K562 (cell line): ENCODE measurements at regions of chr3 and their contacts with region 1.

Region 1: GRCh38 chr3:13405614-13406013 is 14.5 kb downstream of the NUP210 start:
- DNase-seq: peak in 1 of 4 experiments; percentile 48
- ATAC-seq: no peak
- H3K4me3 ChIP-seq: no peak overlapping the region
- H3K27ac ChIP-seq: peak overlapping the region; percentile 8; the same call in 1 of the 3 replicates
- H3K4me1 ChIP-seq: peaks cover 32 to 42% of the 10 kb centered on the region in 2 experiments; a peak in 4 of 5 replicates
- H3K27me3 ChIP-seq: no peaks in the 10 kb centered on the region
- CTCF ChIP-seq: no peak
- EP300 ChIP-seq: no peak
- POLR2A ChIP-seq: no peak
- RAD21 ChIP-seq: no peak

Region 2: GRCh38 chr3:12436514-12437220 is 968.9 kb before region 1 on chr3:
- CTCF ChIA-PET with region 1: no interaction called
- POLR2A ChIA-PET with region 1: no interaction called
- in situ Hi-C with region 1: no loop called
- intact Hi-C with region 1: no loop called
- DNase-seq: no peak
- ATAC-seq: no peak
- H3K4me3 ChIP-seq: no peak overlapping the region
- H3K27ac ChIP-seq: no peak overlapping the region
- H3K4me1 ChIP-seq: peaks cover 0 to 3% of the 10 kb centered on the region in 2 experiments; a peak in 1 of 5 replicates
- H3K27me3 ChIP-seq: peaks cover 42 to 67% of the 10 kb centered on the region in 2 experiments
- CTCF ChIP-seq: no peak
- EP300 ChIP-seq: no peak
- POLR2A ChIP-seq: no peak
- RAD21 ChIP-seq: no peak

Region 3: DNA sequence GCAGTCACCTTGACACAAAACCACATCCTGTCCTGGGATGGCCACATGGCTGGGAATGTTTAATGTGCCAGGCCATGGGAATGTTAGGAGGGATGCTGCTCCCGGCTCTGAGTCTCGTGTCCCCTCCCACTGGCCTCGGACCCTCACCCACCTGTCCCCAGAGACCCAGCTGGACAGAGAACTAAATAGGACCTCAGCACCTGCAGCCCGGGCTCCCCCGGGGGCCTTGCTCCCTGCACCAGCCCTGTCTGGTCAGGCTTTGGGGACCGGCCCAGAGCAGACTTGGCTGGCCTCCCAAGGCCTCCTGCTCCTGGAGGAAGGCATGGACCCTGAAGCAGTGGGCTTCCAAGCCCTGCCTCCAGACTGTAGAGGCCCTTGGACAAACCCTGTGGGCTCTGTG is 232.4 kb before region 1 on chr3:
- CTCF ChIA-PET with region 1: no interaction called
- POLR2A ChIA-PET with region 1: no interaction called
- in situ Hi-C with region 1: no loop called
- intact Hi-C with region 1: no loop called
- DNase-seq: no peak
- ATAC-seq: no peak
- H3K4me3 ChIP-seq: no peak overlapping the region
- H3K27ac ChIP-seq: no peak overlapping the region
- H3K4me1 ChIP-seq: no peaks in the 10 kb centered on the region; a peak in 1 of 5 replicates
- H3K27me3 ChIP-seq: peaks cover 18 to 40% of the 10 kb centered on the region in 2 experiments
- CTCF ChIP-seq: no peak
- EP300 ChIP-seq: no peak
- POLR2A ChIP-seq: no peak
- RAD21 ChIP-seq: no peak

Region 4: GRCh38 chr3:13346481-13347389 is 58.9 kb before region 1 on chr3:
- CTCF ChIA-PET with region 1: no interaction called
- POLR2A ChIA-PET with region 1: no interaction called
- in situ Hi-C with region 1: no loop called
- intact Hi-C with region 1: no loop called
- DNase-seq: no peak
- ATAC-seq: no peak
- H3K4me3 ChIP-seq: no peak overlapping the region
- H3K27ac ChIP-seq: no peak overlapping the region
- H3K4me1 ChIP-seq: peaks cover 0 to under 1% of the 10 kb centered on the region in 2 experiments; a peak in 1 of 5 replicates
- H3K27me3 ChIP-seq: no peaks in the 10 kb centered on the region
- CTCF ChIP-seq: no peak
- EP300 ChIP-seq: no peak
- POLR2A ChIP-seq: no peak
- RAD21 ChIP-seq: no peak

Region 5: GRCh38 chr3:13391308-13391707 is 14.3 kb before region 1 on chr3:
- CTCF ChIA-PET with region 1: no interaction called
- POLR2A ChIA-PET with region 1: interaction called, 13 read pairs
- in situ Hi-C with region 1: no loop called
- intact Hi-C with region 1: no loop called
- DNase-seq: peak in 1 of 4 experiments; percentile 56
- ATAC-seq: peak; percentile 77
- H3K4me3 ChIP-seq: no peak overlapping the region
- H3K27ac ChIP-seq: no peak overlapping the region
- H3K4me1 ChIP-seq: peaks cover 0 to 3% of the 10 kb centered on the region in 2 experiments; a peak in 1 of 5 replicates
- H3K27me3 ChIP-seq: no peaks in the 10 kb centered on the region
- CTCF ChIP-seq: peak; percentile 12 to 66 (median 50); a peak in 5 of 6 replicates
- EP300 ChIP-seq: no peak
- POLR2A ChIP-seq: no peak
- RAD21 ChIP-seq: peak in 1 of 2 experiments; percentile 55; a peak in 2 of 4 replicates

Region 6: DNA sequence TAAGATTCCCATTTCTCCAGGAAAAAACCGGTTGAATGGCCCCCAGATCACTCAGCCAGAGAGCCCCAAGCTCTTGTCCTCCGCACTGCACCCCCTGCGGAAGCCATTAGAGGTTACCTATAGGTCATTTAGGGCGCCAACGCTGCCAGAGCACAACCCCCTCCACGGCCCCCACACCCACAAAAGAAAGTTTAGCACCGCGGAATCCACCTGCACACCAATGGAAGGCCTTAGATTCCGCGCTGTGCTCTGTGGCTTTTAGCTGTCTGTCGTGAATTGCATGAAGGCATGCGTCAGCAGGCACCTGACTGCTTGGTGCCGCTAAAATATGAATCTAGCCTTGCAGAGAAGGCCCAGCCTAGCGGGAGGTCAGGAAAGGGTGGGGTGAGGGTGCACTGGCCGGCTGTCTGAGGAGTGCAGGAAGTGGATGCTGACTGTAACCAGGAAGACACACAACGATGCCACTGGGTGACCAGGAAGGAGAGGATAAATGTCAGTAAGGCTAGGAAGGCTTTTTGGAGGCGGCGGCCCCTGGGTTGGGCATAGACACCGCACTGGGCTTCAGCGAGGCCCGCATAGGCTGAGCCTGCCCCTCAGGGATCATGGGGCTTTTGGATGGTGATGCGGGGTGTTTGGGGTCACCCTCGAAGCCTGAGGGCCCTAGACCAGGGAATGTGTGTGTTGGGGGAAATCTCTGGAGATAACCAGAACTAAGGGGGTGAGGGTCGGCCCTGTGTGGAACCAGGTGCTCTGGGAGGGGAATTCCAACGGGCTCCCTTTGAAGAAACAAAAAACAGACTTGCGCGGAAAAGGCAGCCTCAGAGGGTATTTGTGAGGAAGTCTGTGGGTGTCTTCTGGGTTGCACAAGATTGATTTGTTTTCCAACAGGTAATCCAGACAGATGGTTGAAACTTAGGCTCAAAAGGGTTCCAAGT is 15.5 kb after region 1 on chr3:
- CTCF ChIA-PET with region 1: no interaction called
- POLR2A ChIA-PET with region 1: interaction called, 29 read pairs
- in situ Hi-C with region 1: no loop called
- intact Hi-C with region 1: no loop called
- DNase-seq: peak; percentile 68 to 91 (median 78)
- ATAC-seq: peak; percentile 74
- H3K4me3 ChIP-seq: peak overlapping the region; percentile 62
- H3K27ac ChIP-seq: peak overlapping the region; percentile 91
- H3K4me1 ChIP-seq: peaks cover 41 to 50% of the 10 kb centered on the region in 2 experiments
- H3K27me3 ChIP-seq: no peaks in the 10 kb centered on the region
- CTCF ChIP-seq: no peak
- EP300 ChIP-seq: peak; percentile 7; the same call in 1 of the 2 replicates
- POLR2A ChIP-seq: peak; percentile 73
- RAD21 ChIP-seq: no peak

Region 7: GRCh38 chr3:13429631-13430291 is 24.1 kb after region 1 on chr3:
- CTCF ChIA-PET with region 1: no interaction called
- POLR2A ChIA-PET with region 1: interaction called, 5 read pairs
- in situ Hi-C with region 1: no loop called
- intact Hi-C with region 1: loop called (anchors 2 kb)
- DNase-seq: peak in 2 of 4 experiments; percentile 15 to 67
- ATAC-seq: peak; percentile 60
- H3K4me3 ChIP-seq: no peak overlapping the region
- H3K27ac ChIP-seq: peak overlapping the region; percentile 45; the same call in 2 of the 3 replicates
- H3K4me1 ChIP-seq: peaks cover 10 to 15% of the 10 kb centered on the region in 2 experiments; a peak in 3 of 5 replicates
- H3K27me3 ChIP-seq: no peaks in the 10 kb centered on the region; a peak in 1 of 5 replicates
- CTCF ChIP-seq: no peak
- EP300 ChIP-seq: peak; percentile 28; the same call in 1 of the 2 replicates
- POLR2A ChIP-seq: no peak
- RAD21 ChIP-seq: no peak